Activated CD8-positive, alpha-beta T cell treated with anti-CD3 and anti-CD28 coated beads, Interleukin-2, amount 10 ng/mL, durations not matched to agents 7 days and 5 days (primary cell): ENCODE measurements at regions of chr11 and their contacts with region 1.

Region 1: DNA sequence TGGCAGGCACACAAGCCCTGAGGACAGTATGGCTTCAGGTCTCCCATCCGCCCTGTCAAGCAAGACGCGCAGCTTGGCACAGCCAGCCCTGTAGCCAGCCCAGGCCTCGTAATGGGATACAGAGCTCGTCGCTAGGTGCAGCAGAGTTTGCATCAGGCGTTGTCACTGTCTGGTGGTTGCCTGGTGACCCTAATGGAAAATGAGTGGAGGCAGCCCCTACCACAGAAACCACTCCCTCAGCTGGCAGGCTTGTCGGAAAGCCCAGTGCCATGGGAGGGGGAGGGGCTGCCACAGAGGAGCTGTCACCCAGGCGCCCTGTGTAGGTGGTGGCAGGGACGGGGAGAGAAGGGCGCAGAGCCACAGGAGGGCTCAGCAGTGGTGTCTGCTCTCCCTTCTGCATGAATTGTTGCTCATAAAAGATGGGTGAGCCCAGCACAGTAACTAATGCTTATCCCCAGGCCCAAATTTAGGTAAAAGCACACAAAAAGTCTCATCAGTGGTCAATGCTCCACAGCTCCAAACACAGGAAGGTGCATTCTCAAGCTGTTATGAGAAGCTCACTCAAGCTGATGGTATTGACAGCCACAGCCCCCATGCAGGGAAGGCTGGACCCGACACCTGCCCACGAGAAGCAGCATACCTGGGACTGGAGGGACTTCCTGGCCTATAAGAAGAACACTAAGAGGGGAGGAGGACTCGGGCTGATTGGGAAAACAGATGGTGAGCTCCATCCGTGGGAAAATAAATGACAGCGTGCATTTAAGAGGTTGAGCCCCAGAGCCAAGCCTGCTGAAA is 164.6 kb downstream of the ETS1 start:
- DNase-seq: peak; percentile 85
- ATAC-seq: peak; percentile 94
- H3K4me3 Mint-ChIP-seq: peak overlapping the region; percentile 19
- H3K27ac Mint-ChIP-seq: peak overlapping the region; percentile 76
- H3K4me1 Mint-ChIP-seq: peaks cover 27% of the 10 kb centered on the region
- H3K27me3 Mint-ChIP-seq: no peaks in the 10 kb centered on the region

Region 2: DNA sequence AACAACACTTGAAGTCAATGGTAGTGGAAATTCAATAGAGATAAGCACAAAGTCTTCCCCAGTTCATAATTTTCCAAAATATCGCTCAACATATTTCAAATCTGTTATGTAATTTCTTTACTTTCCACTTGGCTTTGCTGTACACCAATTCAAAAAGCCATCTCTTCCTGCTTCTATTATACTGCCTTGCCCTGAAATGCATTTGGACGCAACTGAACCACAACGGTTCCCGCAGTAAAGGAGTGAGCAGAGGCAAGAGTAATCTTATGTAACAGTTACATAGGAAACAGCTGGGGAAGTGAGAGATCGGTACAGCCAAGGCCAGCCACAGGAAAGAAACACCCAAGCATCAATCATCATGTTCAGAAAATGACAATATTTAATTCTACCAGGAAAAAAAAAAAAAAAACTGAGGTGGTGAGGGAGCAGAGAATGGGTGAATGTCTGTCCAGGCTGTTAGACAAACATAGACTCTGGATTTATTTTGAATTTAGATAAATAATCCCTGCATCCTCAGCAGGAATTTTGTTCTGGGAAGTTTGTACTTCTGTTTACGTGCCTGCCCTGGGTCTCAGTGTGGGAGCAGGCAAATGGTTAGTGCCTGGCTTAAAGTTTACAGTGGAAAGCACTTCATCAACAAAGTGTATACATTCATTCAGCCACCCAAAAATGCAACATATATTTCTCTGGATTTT is 227.6 kb before region 1 on chr11:
- CTCF ChIA-PET with region 1: no interaction called
- POLR2A ChIA-PET with region 1: no interaction called
- DNase-seq: peak; percentile 73
- ATAC-seq: peak; percentile 80
- H3K4me3 Mint-ChIP-seq: peak overlapping the region; percentile 34
- H3K27ac Mint-ChIP-seq: peak overlapping the region; percentile 64
- H3K4me1 Mint-ChIP-seq: peaks cover 38% of the 10 kb centered on the region
- H3K27me3 Mint-ChIP-seq: no peaks in the 10 kb centered on the region

Region 3: DNA sequence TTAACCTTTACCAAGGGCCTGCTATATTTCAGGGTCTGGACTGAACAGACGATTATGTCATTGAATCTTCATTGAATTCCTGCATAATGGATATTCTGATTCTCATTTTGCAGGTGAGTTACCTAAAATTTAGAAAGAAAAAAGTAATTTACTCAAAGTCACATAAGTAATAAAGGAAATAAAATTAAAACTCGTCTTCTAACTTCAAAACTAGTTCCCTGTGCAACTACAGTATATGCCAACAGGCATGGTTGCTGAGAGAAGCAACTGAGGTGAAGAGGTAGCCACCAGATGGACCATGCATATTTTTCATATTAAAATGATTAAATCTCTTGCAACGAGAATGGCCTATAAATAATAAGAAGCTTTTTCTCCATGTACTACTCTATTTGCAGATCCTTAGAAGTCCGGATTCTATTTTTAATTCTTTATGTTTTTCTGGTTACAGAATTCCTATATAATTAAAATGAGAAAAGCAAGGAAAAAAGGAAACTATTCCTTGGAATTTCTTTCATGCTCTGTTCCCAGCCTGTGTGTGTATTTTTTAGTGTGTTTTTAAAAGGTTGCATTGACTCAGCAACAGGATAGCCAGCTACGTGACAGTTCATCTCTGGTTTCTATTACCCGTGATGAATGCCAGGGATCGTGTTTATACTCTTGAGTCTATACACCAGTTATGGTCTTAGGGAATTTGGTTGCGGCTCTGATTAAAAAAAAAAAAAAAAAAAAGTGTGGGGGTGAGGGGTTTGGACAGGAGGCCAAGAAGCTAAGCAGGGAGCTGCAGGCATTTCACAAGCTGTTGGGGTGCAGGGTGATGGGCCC is 22.2 kb before region 1 on chr11:
- CTCF ChIA-PET with region 1: interaction called, 10 read pairs
- POLR2A ChIA-PET with region 1: no interaction called
- DNase-seq: no peak
- ATAC-seq: no peak
- H3K4me3 Mint-ChIP-seq: no peak overlapping the region
- H3K27ac Mint-ChIP-seq: no peak overlapping the region
- H3K4me1 Mint-ChIP-seq: peaks cover 10% of the 10 kb centered on the region
- H3K27me3 Mint-ChIP-seq: no peaks in the 10 kb centered on the region

Region 4: GRCh38 chr11:128517457-128518230 is 94.9 kb after region 1 on chr11:
- CTCF ChIA-PET with region 1: no interaction called
- POLR2A ChIA-PET with region 1: no interaction called
- DNase-seq: no peak
- ATAC-seq: no peak
- H3K4me3 Mint-ChIP-seq: peak overlapping the region; percentile 96
- H3K27ac Mint-ChIP-seq: peak overlapping the region; percentile 82
- H3K4me1 Mint-ChIP-seq: peaks cover 35% of the 10 kb centered on the region
- H3K27me3 Mint-ChIP-seq: no peaks in the 10 kb centered on the region

Region 5: DNA sequence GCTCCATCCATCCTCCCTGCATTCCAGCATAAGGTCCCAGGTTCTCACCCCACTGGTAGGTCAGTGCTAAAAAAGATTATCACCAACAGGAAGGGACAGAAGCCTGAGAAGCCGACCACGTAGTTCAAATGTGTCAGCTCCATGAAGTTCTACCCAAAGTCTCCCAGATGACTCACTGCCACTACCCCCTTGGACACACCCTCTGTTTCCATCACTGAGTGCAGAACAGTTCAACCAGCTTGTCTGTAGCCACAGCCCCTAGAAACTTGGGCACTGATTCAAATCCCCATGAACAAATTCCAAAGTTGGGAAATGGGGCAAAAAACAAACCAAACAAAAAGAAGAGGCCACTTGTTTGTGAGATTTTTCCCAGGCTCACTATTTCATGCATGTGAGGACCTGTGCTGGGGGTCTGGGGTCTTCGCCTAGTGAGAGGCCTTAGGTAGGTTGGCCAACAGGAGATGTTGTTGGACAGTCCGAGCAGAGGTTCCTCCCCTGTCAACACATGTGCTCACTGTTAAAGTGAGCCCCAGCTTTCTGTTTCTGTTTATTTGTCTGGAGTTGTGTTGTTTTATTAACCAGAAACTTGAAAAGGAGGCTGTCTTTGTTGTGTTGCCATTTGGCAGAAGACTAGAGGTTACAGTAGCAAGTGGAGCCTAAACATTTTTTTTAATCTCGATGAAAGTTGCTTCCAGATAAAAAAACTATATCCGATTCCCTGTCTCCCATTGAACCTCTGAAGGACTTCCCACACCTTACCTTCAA is 246.9 kb after region 1 on chr11:
- CTCF ChIA-PET with region 1: no interaction called
- POLR2A ChIA-PET with region 1: no interaction called
- DNase-seq: no peak
- ATAC-seq: no peak
- H3K4me3 Mint-ChIP-seq: no peak overlapping the region
- H3K27ac Mint-ChIP-seq: no peak overlapping the region
- H3K4me1 Mint-ChIP-seq: peaks cover 6% of the 10 kb centered on the region
- H3K27me3 Mint-ChIP-seq: peaks cover 17% of the 10 kb centered on the region